ENCODE measurements at regions of chr4 and their contacts with region 1.

Region 1: DNA sequence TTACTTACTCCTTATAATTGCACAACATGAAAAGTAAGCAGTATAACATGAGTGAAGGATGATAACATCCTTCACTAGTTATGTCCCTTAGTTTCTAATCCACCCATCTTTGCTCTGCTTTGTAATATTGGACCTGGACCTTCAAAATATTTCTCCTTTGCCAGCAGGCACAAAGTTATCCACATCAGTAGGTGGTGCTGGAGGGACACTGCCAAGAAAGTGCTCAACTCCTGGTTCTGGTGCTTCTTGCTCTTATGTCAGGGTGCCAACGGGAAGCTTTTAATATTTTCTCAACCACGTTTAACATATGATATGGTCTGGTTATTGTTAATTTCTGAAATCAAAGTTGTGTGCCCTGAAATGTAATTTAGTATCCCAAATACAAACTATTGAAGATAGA is 49.1 kb downstream of the TMEM165 start:
- DNase-seq: no peak
- ATAC-seq: no peak
- H3K4me3 Mint-ChIP-seq: no peak overlapping the region
- H3K27ac Mint-ChIP-seq: no peak overlapping the region
- H3K4me1 Mint-ChIP-seq: peaks cover 7% of the 10 kb centered on the region
- H3K27me3 Mint-ChIP-seq: no peaks in the 10 kb centered on the region

Region 2: DNA sequence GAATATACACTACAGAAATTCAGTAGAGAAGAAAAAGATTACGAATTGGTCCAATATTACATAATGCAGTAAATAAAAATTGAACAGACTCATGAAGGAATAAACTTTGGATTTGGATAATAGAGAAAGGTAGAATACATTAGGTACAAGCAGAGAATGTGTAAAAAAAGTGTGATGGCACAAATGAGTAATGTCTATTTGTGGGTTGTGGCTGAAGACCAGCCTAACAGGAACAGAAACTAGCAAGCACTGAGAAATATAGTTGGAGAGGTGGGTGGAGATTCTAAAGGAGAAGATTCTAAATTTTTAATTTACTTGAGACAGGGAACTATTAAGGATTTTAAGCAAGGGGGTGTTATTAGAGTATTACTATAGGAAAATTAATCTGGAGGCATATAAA is 117.1 kb after region 1 on chr4:
- CTCF ChIA-PET with region 1: no interaction called
- POLR2A ChIA-PET with region 1: no interaction called
- intact Hi-C with region 1: no loop called
- DNase-seq: no peak
- ATAC-seq: peak; percentile 70
- H3K4me3 Mint-ChIP-seq: no peak overlapping the region
- H3K27ac Mint-ChIP-seq: no peak overlapping the region
- H3K4me1 Mint-ChIP-seq: peaks cover 8% of the 10 kb centered on the region
- H3K27me3 Mint-ChIP-seq: peaks cover 15% of the 10 kb centered on the region

Region 3: DNA sequence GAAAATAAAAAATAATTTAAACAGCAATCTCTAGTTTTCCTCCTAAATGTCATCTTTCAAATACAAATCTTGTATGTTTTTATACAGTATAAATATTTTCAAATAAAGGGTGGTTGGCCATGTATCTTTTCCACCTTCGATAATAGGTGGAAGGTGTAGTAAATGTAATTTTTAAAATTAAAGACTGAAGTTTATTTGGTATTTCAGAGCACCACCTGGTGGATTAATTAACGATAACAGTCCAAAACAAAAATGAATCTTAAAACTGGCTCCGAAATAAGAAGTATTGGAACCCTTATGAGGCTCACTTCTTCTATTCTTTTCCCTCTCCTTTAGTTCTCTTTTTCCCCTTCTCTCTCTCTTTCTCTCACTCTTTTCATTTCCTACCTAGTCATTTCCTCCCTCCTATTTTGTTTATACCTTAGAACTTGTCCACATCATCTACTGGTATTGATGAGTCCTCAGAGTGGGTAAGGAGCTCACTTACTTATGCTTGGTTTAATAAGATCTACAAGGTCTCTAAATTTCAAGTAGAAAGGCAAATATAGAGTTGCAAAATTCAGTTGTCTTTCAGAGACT is 291.9 kb after region 1 on chr4:
- CTCF ChIA-PET with region 1: interaction called, 3 read pairs
- POLR2A ChIA-PET with region 1: no interaction called
- intact Hi-C with region 1: loop called in 1 of 2 experiments (anchors 10 kb)
- DNase-seq: no peak
- ATAC-seq: no peak
- H3K4me3 Mint-ChIP-seq: no peak overlapping the region
- H3K27ac Mint-ChIP-seq: no peak overlapping the region
- H3K4me1 Mint-ChIP-seq: no peaks in the 10 kb centered on the region
- H3K27me3 Mint-ChIP-seq: peaks cover 37% of the 10 kb centered on the region

Region 4: DNA sequence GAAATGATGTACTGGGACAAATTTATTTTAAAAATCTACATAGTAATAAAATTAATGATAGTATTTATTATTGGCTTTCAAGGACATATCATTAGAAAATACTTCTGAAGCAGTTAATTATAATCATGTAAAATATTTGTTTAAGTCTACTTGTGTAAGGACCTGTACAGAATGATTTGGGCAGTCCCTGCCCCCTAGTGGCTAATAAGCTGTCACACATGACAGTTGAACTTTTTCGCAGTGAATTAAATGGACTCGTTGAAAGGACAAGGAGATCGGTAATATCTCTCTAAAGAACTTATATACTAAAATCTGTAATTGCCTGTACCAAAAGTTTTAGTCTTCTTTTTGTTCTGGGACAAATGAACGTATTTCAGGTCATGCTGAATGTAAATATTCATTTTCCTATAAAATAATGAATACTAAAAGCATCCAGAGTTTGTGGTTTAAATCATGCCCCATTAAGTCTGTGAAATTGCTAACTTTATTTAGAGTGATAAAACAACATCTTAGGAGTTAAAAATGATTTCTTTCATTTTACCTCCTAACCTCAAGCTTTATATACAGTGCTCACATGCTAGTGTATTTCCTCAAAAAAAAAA is 422.2 kb after region 1 on chr4:
- CTCF ChIA-PET with region 1: no interaction called
- POLR2A ChIA-PET with region 1: no interaction called
- intact Hi-C with region 1: no loop called
- DNase-seq: peak; percentile 20
- ATAC-seq: peak; percentile 62
- H3K4me3 Mint-ChIP-seq: no peak overlapping the region
- H3K27ac Mint-ChIP-seq: no peak overlapping the region
- H3K4me1 Mint-ChIP-seq: peaks cover 20% of the 10 kb centered on the region
- H3K27me3 Mint-ChIP-seq: no peaks in the 10 kb centered on the region

Measured in activated CD4-positive, alpha-beta T cell treated with anti-CD3 and anti-CD28 coated beads for 36 hours (primary cell).